ENCODE measurements at regions of chr3 and their contacts with region 1.

Region 1: GRCh38 chr3:69948246-69948862 is 51.2 kb upstream of the SAMMSON start:
- DNase-seq: no peak
- ATAC-seq: no peak

Region 2: GRCh38 chr3:69642606-69643005 is 305.7 kb before region 1 on chr3:
- intact Hi-C with region 1: no loop called
- DNase-seq: no peak
- ATAC-seq: peak; percentile 61 to 71

Region 3: DNA sequence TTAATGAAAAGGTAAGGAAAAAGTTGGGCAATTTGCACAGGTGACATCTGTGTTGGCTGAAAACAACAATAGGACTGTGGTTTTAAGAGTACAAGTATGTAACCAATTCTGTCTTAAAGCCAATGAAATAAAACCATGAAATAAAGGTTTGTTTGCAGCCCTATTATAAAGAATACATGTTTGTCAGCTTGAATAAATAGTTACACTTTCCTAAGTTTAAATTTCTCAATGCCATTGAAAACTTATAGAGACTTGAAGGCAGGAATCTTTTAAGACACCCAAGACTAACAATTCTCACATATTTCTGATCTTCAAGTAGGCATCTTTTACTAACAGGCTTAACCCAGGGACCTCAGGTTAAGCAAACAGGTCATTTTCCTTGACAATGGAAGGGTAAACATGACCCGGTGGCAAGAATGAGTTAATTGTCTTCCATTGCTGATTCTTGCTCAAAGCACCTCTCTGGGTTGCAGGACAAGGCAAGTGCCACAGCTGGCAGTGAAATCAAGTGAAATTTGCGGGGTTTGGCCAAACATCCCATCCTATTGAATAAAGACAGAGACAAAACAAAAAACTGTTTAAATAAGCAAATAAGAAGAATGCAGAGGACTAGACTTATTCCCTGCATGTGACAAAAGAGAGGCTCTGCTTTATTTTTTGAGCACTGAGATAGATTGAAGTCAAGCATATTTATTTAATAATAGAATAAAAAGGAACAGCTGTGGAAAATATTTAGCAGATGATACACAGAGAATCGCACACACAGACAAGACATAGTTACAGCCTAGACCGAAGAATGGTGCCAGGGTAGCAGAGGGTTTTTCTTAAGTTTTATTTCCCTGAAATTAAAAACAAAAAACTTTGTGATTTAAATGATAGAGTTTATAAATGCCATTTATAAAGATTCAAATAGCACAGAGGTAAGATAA is 265.2 kb before region 1 on chr3:
- intact Hi-C with region 1: loop called in 1 of 2 experiments (anchors 10 kb)
- DNase-seq: no peak
- ATAC-seq: no peak

Region 4: GRCh38 chr3:69691860-69692259 is 256.5 kb before region 1 on chr3:
- intact Hi-C with region 1: loop called (anchors 5 to 10 kb)
- DNase-seq: no peak
- ATAC-seq: no peak

Region 5: GRCh38 chr3:69739204-69740102 is 208.9 kb before region 1 on chr3 and contains the start of gene MITF:
- intact Hi-C with region 1: no loop called
- DNase-seq: peak; percentile 95
- ATAC-seq: peak; percentile 97 to 99
- total RNA-seq, gene MITF: 35.2 to 51.4 TPM

Region 6: DNA sequence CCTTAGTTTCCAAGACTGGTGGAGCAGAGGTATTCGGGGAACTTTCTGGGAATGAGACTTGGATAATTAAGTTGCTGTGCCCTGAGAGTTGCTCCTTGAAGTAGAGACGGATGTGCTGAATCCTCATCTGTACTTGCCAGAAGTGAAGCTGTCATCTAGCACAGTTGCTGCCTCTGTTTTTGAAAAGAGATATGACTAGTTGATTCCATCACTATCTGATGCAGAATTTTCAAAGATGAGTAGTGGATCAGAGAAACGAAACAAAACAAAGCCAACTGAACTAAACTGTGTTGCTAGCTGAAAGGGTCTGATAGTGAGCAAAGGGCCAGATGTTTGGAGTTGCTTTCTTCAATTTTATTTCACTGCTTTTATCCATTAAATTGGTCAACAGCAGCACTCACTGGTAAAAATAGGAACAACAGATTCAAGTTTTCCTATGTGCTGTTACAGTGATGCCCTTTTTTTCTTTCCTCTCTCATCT is 156.4 kb before region 1 on chr3:
- intact Hi-C with region 1: loop called in 1 of 2 experiments (anchors 5 kb)
- DNase-seq: no peak
- ATAC-seq: peak; percentile 65 to 77

Measured in left cardiac atrium (tissue), 4 donors.